Naive thymus-derived CD8-positive, alpha-beta T cell (primary cell): ENCODE measurements at regions of chr14 and their contacts with region 1.

Region 1: GRCh38 chr14:95527387-95528002 is 7.4 kb upstream of the GLRX5 start:
- DNase-seq: peak in 7 of 10 donors; percentile 25 to 70 (median 41)
- ATAC-seq: peak in 1 of 2 donors; percentile 44
- H3K4me3 Mint-ChIP-seq: peak overlapping the region in 3 of 10 donors; percentile 15 to 59 (median 40)
- H3K27ac Mint-ChIP-seq: peak overlapping the region; percentile 5 to 100 (median 72)
- H3K4me1 Mint-ChIP-seq: peaks cover 35 to 71% (median 66%) of the 10 kb centered on the region in 4 donors
- H3K27me3 Mint-ChIP-seq: no peaks in the 10 kb centered on the region

Region 2: GRCh38 chr14:95442633-95443021 is 84.9 kb before region 1 on chr14:
- POLR2A ChIA-PET with region 1: interaction called, 14 read pairs
- DNase-seq: peak; percentile 54 to 88 (median 70)
- ATAC-seq: peak; percentile 99
- H3K4me3 Mint-ChIP-seq: no peak overlapping the region
- H3K27ac Mint-ChIP-seq: peak overlapping the region; percentile 3 to 93 (median 66)
- H3K4me1 Mint-ChIP-seq: peaks cover 4 to 16% (median 8%) of the 10 kb centered on the region in 4 donors
- H3K27me3 Mint-ChIP-seq: no peaks in the 10 kb centered on the region

Region 3: DNA sequence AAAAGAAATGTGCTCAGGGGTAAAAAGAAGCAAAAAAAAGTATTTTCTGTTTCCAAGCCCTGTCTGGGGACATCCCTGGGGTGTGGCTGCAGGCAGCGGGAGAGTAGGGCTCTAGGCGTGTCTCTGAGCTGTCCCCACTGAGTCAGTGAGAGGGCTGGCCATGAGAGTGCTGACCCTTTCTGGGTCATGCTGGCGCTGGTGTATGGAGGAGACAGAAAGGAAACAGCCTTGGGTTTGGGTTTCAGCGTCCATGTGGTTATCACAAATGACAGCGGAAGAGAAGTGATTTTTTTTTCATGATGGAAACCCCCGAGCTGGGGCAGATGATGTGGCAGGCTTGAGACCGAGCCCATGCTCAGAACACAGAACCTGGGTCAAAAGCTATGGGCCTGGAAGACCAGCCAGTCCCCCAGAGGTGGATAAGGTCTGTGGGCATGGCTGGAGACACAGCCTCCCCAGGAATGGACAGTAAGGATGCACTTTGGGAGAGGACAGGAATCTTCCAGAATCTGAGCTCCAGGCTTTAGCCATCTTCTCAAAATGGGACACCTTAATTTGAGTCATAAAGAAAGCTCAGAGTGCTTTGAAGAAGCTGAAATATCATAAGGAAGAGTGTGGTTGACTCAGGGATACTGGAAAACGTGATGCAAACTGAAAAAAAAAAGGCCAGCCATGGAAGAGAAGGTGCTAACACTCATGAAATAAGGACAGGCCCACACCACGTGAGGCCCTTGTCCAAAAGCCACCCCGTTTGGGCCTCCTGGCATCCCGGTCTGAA is 47.2 kb before region 1 on chr14:
- POLR2A ChIA-PET with region 1: interaction called, 398 read pairs
- DNase-seq: no peak
- ATAC-seq: peak; percentile 30 to 62
- H3K4me3 Mint-ChIP-seq: peak overlapping the region in 4 of 10 donors; percentile 5 to 55 (median 31)
- H3K27ac Mint-ChIP-seq: peak overlapping the region in 9 of 10 donors; percentile 63 to 87 (median 79)
- H3K4me1 Mint-ChIP-seq: peaks cover 29 to 67% (median 60%) of the 10 kb centered on the region in 4 donors
- H3K27me3 Mint-ChIP-seq: no peaks in the 10 kb centered on the region

Region 4: GRCh38 chr14:95515596-95516552 is 11.6 kb before region 1 on chr14:
- POLR2A ChIA-PET with region 1: interaction called, 54 read pairs
- DNase-seq: peak; percentile 76 to 85 (median 79)
- ATAC-seq: peak; percentile 81 to 93
- H3K4me3 Mint-ChIP-seq: peak overlapping the region; percentile 86 to 95 (median 88)
- H3K27ac Mint-ChIP-seq: peak overlapping the region; percentile 80 to 96 (median 91)
- H3K4me1 Mint-ChIP-seq: peaks cover 44 to 77% (median 74%) of the 10 kb centered on the region in 4 donors
- H3K27me3 Mint-ChIP-seq: no peaks in the 10 kb centered on the region

Region 5: DNA sequence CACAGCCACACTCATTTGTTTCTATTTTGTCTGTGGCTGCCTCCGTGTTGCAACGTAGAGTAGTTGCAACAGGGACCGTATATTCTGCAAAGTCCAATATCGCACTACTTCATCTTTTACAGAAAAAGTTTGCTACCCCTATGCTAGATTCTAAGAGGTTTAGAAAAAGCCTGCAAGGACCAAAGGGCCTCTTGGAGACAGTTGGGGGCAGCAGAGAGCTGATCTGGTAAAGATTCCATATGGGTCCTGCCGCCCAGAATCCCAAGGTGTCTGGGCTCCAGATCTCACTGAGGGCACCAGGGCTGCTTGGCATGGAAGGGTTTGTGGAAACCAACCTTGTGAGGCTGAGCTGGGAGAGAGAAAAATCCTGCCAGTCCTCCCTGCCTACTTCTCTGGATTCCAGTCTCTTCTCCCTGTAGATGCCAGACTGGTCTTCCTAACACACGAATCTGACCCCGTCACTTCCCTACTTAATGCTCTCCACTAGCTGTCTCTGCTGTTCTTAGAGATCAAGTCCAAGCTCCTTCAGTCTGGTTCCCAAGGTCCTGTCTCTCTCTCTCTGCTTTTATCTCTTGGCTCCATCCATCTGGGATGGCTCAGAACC is 82.0 kb after region 1 on chr14:
- POLR2A ChIA-PET with region 1: no interaction called
- DNase-seq: no peak
- ATAC-seq: no peak
- H3K4me3 Mint-ChIP-seq: no peak overlapping the region
- H3K27ac Mint-ChIP-seq: no peak overlapping the region
- H3K4me1 Mint-ChIP-seq: peaks cover 0 to 15% (median under 1%) of the 10 kb centered on the region in 4 donors
- H3K27me3 Mint-ChIP-seq: peaks cover 17 to 61% (median 31%) of the 10 kb centered on the region in 5 donors